Left ventricle myocardium superior (tissue), 1 donor: ENCODE measurements at regions of chr2 and their contacts with region 1.

Region 1: DNA sequence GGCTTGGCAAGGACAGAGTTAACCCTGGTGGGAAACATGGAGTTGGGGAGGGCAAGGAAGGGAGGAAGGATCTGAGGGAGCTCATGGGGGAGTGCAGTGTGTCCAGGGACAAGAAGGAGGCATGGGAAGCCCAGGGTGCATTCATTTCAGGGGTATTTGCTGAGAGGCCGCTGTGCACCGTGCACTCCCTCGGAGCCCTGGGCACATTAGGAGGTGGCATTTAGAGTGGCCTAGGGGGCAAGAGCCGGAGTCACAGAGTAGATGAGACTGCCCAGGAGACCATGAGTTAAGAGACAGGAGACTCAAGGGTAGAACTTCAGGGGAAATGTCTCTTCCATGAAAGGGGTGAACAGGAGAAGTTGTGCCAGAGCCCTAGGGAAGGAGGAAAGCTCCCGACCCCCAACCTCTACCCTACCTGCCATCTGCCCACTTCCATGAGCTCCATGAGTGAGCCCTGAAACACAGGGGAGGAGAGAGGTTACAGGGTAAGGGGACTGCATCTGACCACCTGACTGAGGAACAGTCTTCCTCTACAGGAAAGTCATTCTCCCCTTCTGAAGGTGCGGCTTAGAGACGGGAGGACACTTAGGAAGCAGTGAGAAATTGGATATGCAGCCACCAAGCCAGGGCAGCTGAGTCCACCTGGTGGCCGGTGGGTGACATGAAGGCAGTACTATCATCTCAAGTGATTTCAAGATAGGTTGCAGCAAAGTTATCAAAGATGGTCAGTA is 58.5 kb upstream of the COPS8 start:
- DNase-seq: peak; percentile 84
- ATAC-seq: peak; percentile 93

Region 2: GRCh38 chr2:236507393-236508085 is 519.6 kb before region 1 on chr2:
- intact Hi-C with region 1: loop called (anchors 5 kb)
- DNase-seq: peak; percentile 72
- ATAC-seq: peak; percentile 77

Region 3: GRCh38 chr2:237132799-237133198 is 105.7 kb after region 1 on chr2:
- intact Hi-C with region 1: no loop called
- DNase-seq: no peak
- ATAC-seq: no peak